Right cardiac atrium (tissue), 5 donors: ENCODE measurements at regions of chr1 and their contacts with region 1.

Region 1: DNA sequence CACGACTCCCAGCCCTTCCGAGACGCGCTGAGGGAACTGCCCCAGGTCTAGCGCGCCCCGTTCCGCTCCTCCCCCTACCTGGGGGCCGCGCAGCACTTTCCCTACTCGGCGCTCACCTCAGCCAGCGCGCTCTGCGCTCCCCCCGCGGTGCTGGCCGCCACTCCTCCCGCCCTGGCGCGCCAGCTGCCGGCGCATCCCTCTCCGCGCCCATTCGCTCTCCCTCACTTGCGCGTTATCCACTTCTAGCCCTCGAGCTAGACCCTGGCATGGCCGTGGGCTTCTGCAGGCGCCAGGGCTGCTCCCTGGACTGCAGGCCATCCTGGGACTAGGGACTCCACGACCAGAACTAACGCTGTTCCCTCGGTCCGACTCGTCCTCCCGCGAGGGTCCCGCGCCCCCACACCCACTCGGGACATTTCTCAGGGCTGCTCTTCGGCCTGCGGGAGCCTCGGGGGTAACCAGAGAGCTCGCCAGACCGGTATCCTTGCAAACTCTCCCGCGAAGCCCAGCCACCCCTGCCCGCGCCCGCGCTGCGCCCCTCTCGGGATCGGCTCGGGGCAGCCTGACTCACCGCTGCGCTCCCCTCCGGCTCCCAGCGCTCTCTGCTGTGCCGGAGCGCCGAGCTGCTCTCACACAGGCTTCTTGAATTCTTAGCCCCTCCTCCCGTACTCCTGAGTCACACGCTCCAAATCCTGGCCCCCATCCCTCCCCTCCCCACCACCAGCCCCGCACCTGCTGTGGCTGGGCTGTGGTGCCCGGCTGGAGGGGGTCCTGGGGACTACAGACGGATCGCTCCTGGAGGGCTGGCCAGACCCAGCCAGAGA is at the start of gene NGF:
- DNase-seq: peak; percentile 72 to 86 (median 85)
- ATAC-seq: peak; percentile 82 to 93
- H3K4me3 ChIP-seq: peak within 1 kb of the TSS; percentile 64
- H3K27ac ChIP-seq: peak within 1 kb of the TSS; percentile 44
- H3K4me1 ChIP-seq: peaks cover 2% of the 10 kb centered on the region
- H3K27me3 ChIP-seq: no peaks in the 10 kb centered on the region
- total RNA-seq, gene NGF: 3.3 to 7.4 (median 5.6) TPM

Region 2: DNA sequence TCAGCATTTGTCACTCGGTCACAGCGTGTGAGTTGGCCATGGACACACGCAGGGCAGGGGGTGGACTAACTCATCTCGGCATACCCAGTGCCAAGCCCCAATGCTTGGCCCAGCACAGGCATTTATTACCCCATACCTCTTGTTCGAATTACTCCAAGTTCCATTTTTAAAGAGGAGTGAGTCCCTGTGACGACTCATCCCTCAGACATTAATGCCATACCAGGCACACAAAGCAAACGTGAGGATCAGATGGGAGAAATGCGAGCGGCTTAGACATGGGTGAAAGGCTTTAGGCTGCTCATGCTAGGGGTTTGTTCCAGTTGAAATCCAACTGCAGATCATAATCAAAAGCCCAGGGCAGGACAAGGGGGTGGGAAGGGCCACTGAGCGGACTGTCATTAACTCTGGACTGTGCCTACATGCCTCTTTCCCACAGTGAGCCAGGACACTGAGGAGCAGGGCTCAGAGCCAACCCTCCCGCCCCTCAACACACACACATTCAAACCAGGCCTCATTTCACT is 118.7 kb after region 1 on chr1:
- intact Hi-C with region 1: loop called in 1 of 4 experiments (anchors 10 kb)
- DNase-seq: peak in 1 of 3 donors; percentile 59
- ATAC-seq: peak; percentile 54 to 63
- H3K4me3 ChIP-seq: no peak overlapping the region
- H3K27ac ChIP-seq: no peak overlapping the region
- H3K4me1 ChIP-seq: no peaks in the 10 kb centered on the region
- H3K27me3 ChIP-seq: no peaks in the 10 kb centered on the region